WTC11 (cell line): ENCODE measurements at regions of chr6 and their contacts with region 1.

Region 1: GRCh38 chr6:107459283-107460082 is at the start of gene PDSS2:
- DNase-seq: peak; percentile 99
- ATAC-seq: peak; percentile 96
- H3K4me3 Mint-ChIP-seq: peak within 1 kb of the TSS; percentile 81
- H3K27ac Mint-ChIP-seq: peak within 1 kb of the TSS; percentile 88
- H3K4me1 Mint-ChIP-seq: peaks cover 7% of the 10 kb centered on the region
- H3K27me3 Mint-ChIP-seq: no peaks in the 10 kb centered on the region
- CTCF ChIP-seq: no peak
- total RNA-seq, gene PDSS2: 15.8 to 18.3 TPM (median 17.2 TPM) in 3 replicates

Region 2: GRCh38 chr6:107489636-107490565 is 30.4 kb after region 1 on chr6 and contains the start of gene SOBP:
- CTCF ChIA-PET with region 1: interaction called, 31 read pairs
- POLR2A ChIA-PET with region 1: interaction called, 7 read pairs
- DNase-seq: peak; percentile 64
- ATAC-seq: peak; percentile 46
- H3K4me3 Mint-ChIP-seq: peak within 1 kb of the TSS; percentile 92
- H3K27ac Mint-ChIP-seq: no peak within 1 kb of the TSS
- H3K4me1 Mint-ChIP-seq: peaks cover 19% of the 10 kb centered on the region
- H3K27me3 Mint-ChIP-seq: peaks cover 41% of the 10 kb centered on the region
- CTCF ChIP-seq: no peak
- total RNA-seq, gene SOBP: 6.6 to 10.1 TPM (median 7.6 TPM) in 3 replicates

Region 3: GRCh38 chr6:107720717-107721116 is 261.2 kb after region 1 on chr6:
- CTCF ChIA-PET with region 1: no interaction called
- POLR2A ChIA-PET with region 1: no interaction called
- DNase-seq: no peak
- ATAC-seq: no peak
- H3K4me3 Mint-ChIP-seq: no peak overlapping the region
- H3K27ac Mint-ChIP-seq: no peak overlapping the region
- H3K4me1 Mint-ChIP-seq: no peaks in the 10 kb centered on the region
- H3K27me3 Mint-ChIP-seq: peaks cover 20% of the 10 kb centered on the region
- CTCF ChIP-seq: no peak